ENCODE measurements at regions of chr12 and their contacts with region 1.

Region 1: GRCh38 chr12:121095544-121096198 is 37.0 kb upstream of the P2RX7 start:
- DNase-seq: peak; percentile 88
- ATAC-seq: peak; percentile 88
- H3K4me3 Mint-ChIP-seq: peak overlapping the region; percentile 65
- H3K27ac Mint-ChIP-seq: peak overlapping the region; percentile 56
- H3K4me1 Mint-ChIP-seq: peaks cover 43% of the 10 kb centered on the region
- H3K27me3 Mint-ChIP-seq: peaks cover 5% of the 10 kb centered on the region

Region 2: GRCh38 chr12:120649442-120650232 is 446.0 kb before region 1 on chr12:
- CTCF ChIA-PET with region 1: interaction called, 3 read pairs
- POLR2A ChIA-PET with region 1: no interaction called
- intact Hi-C with region 1: loop called in 1 of 2 experiments (anchors 1 kb)
- DNase-seq: peak; percentile 35
- ATAC-seq: peak; percentile 8
- H3K4me3 Mint-ChIP-seq: peak overlapping the region; percentile 37
- H3K27ac Mint-ChIP-seq: no peak overlapping the region
- H3K4me1 Mint-ChIP-seq: peaks cover 15% of the 10 kb centered on the region
- H3K27me3 Mint-ChIP-seq: peaks cover 48% of the 10 kb centered on the region

Region 3: GRCh38 chr12:120944645-120945231 is 150.9 kb before region 1 on chr12:
- CTCF ChIA-PET with region 1: no interaction called
- POLR2A ChIA-PET with region 1: no interaction called
- intact Hi-C with region 1: loop called in 1 of 2 experiments (anchors 1 kb)
- DNase-seq: peak; percentile 86
- ATAC-seq: peak; percentile 91
- H3K4me3 Mint-ChIP-seq: no peak overlapping the region
- H3K27ac Mint-ChIP-seq: no peak overlapping the region
- H3K4me1 Mint-ChIP-seq: peaks cover 8% of the 10 kb centered on the region
- H3K27me3 Mint-ChIP-seq: no peaks in the 10 kb centered on the region

Region 4: GRCh38 chr12:121005346-121005815 is 90.3 kb before region 1 on chr12:
- CTCF ChIA-PET with region 1: interaction called, 13 read pairs
- POLR2A ChIA-PET with region 1: no interaction called
- intact Hi-C with region 1: loop called (anchors 1 to 5 kb)
- DNase-seq: peak; percentile 83
- ATAC-seq: peak; percentile 87
- H3K4me3 Mint-ChIP-seq: no peak overlapping the region
- H3K27ac Mint-ChIP-seq: peak overlapping the region; percentile 31
- H3K4me1 Mint-ChIP-seq: no peaks in the 10 kb centered on the region
- H3K27me3 Mint-ChIP-seq: no peaks in the 10 kb centered on the region

Region 5: GRCh38 chr12:121128970-121129810 is 33.5 kb after region 1 on chr12:
- CTCF ChIA-PET with region 1: no interaction called
- POLR2A ChIA-PET with region 1: no interaction called
- intact Hi-C with region 1: loop called in 1 of 2 experiments (anchors 2 kb)
- DNase-seq: peak; percentile 90
- ATAC-seq: peak; percentile 83
- H3K4me3 Mint-ChIP-seq: peak overlapping the region; percentile 63
- H3K27ac Mint-ChIP-seq: peak overlapping the region; percentile 98
- H3K4me1 Mint-ChIP-seq: peaks cover 68% of the 10 kb centered on the region
- H3K27me3 Mint-ChIP-seq: no peaks in the 10 kb centered on the region

Region 6: GRCh38 chr12:121719926-121720414 is 624.3 kb after region 1 on chr12:
- CTCF ChIA-PET with region 1: no interaction called
- POLR2A ChIA-PET with region 1: no interaction called
- intact Hi-C with region 1: no loop called
- DNase-seq: no peak
- ATAC-seq: no peak
- H3K4me3 Mint-ChIP-seq: no peak overlapping the region
- H3K27ac Mint-ChIP-seq: no peak overlapping the region
- H3K4me1 Mint-ChIP-seq: no peaks in the 10 kb centered on the region
- H3K27me3 Mint-ChIP-seq: no peaks in the 10 kb centered on the region

Measured in activated CD4-positive, alpha-beta T cell treated with anti-CD3 and anti-CD28 coated beads for 36 hours (primary cell).